WTC11 (cell line): ENCODE measurements at regions of chr18 and their contacts with region 1.

Region 1: DNA sequence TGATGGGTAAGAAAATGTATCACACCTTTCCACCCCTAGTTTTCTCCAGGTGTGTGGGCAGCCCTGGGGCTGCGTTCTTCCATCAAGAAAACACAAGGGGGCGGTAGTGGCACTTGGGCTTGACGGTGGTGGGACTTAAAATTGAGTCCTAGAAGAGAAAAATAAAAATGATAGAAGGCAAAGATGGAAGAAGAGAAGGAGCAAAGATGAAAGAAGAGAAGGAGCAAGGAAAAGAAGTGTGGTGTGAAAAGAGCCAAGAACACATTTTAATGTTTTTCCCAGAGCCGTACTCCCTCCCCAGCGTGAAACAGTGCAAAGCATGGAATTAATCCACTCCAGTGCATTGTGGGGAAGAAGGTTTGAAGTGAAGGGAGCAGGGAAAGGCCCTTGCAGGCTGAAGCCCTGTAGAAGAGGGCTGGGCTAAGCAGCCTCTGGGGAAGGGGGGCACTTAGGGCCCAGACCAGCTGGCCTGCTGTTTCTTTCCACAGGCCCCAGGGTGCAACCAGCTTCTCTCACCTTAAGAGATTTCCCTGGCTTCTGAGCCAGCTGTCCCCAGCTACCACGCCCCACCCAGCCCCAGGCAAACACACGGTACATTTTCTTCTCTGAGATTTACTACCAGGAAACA is 256.8 kb downstream of the RNF152 start:
- DNase-seq: peak; percentile 62
- ATAC-seq: peak; percentile 43
- H3K4me3 Mint-ChIP-seq: no peak overlapping the region
- H3K27ac Mint-ChIP-seq: no peak overlapping the region
- H3K4me1 Mint-ChIP-seq: peaks cover 35% of the 10 kb centered on the region
- H3K27me3 Mint-ChIP-seq: peaks cover 83% of the 10 kb centered on the region
- CTCF ChIP-seq: peak; percentile 83

Region 2: DNA sequence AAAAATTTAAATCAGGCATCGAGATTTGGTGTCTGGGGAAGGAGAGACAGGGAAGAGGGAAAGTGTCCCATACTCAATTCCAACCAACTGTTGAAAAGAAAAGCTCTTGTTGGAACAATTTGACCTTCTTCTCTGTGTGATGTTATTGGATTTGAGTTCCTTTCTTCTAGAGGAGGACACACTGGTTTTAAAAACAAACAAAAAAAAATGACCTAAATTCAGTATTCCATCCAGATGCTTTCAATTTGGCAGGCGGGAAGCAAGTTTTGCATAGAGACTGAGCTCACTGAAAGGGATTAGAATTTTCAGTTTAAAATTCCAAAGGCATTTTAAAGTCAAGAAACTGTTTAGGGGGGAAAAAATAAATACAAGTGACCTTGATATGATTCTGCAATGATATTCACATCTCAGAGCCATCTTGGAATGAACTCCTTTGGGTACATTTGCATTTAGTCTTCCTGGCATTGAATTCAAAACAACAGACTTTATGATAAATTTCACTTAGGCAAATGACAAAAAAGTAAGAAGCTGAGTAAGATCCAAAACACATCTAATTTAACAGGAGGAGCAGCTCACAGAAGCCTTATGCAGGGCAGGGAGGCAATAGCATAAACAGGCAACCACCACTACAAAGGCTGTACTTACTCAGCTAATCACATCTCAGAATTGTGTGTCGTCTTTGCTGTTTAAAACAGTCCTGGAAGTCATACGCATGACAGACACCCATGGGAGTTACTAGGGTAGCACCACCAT is 175.9 kb before region 1 on chr18:
- CTCF ChIA-PET with region 1: no interaction called
- POLR2A ChIA-PET with region 1: no interaction called
- DNase-seq: no peak
- ATAC-seq: no peak
- H3K4me3 Mint-ChIP-seq: no peak overlapping the region
- H3K27ac Mint-ChIP-seq: no peak overlapping the region
- H3K4me1 Mint-ChIP-seq: 0 out of 2 replicates have a peak, but pooled peaks cover 3% of the 10 kb centered on the region
- H3K27me3 Mint-ChIP-seq: no peaks in the 10 kb centered on the region
- CTCF ChIP-seq: no peak

Region 3: DNA sequence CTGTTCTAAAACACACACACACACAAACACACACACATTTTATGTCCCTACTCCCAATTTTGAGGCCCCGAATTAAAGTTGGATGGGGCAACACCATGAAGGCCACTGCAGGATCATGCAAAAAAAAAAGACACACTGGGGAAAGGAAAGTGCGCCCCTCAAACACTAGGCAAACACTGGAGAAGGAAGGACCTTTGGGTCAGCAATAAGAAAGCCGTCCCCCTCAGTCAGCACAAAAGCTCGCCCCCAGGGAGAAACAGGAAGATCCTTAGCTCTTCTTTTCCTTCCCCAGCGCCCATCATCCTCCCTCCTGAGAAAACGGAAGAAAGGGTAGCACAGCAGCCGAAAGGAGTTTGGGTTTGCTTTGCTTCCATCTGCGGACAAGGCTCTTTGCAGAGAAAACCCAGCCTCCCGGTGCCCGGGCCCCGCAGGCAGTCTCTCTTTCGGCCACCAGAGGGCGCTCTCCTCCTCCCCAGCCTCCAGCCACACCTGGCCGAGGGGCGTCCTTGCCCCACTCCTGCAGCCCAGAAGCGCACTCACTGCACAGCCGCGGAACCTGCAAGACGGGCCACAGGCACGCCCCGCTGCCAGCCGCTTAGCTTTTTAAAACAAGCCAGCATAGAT is 54.3 kb before region 1 on chr18:
- CTCF ChIA-PET with region 1: interaction called, 14 read pairs
- POLR2A ChIA-PET with region 1: no interaction called
- DNase-seq: peak; percentile 93
- ATAC-seq: peak; percentile 98
- H3K4me3 Mint-ChIP-seq: peak overlapping the region; percentile 80
- H3K27ac Mint-ChIP-seq: peak overlapping the region; percentile 11; the same call in 1 of the 2 replicates
- H3K4me1 Mint-ChIP-seq: peaks cover 12% of the 10 kb centered on the region
- H3K27me3 Mint-ChIP-seq: peaks cover 16% of the 10 kb centered on the region
- CTCF ChIP-seq: peak; percentile 99

Region 4: GRCh38 chr18:61606759-61607158 is 29.3 kb before region 1 on chr18:
- CTCF ChIA-PET with region 1: interaction called, 12 read pairs
- POLR2A ChIA-PET with region 1: no interaction called
- DNase-seq: peak; percentile 43
- ATAC-seq: peak; percentile 92
- H3K4me3 Mint-ChIP-seq: peak overlapping the region; percentile 58
- H3K27ac Mint-ChIP-seq: peak overlapping the region; percentile 94
- H3K4me1 Mint-ChIP-seq: peaks cover 47% of the 10 kb centered on the region
- H3K27me3 Mint-ChIP-seq: no peaks in the 10 kb centered on the region; the same call in 1 of the 2 replicates
- CTCF ChIP-seq: no peak

Region 5: GRCh38 chr18:61616111-61616610 is 19.9 kb before region 1 on chr18:
- CTCF ChIA-PET with region 1: interaction called, 11 read pairs
- POLR2A ChIA-PET with region 1: no interaction called
- DNase-seq: no peak
- ATAC-seq: peak; percentile 82
- H3K4me3 Mint-ChIP-seq: no peak overlapping the region
- H3K27ac Mint-ChIP-seq: peak overlapping the region; percentile 84
- H3K4me1 Mint-ChIP-seq: peaks cover 39% of the 10 kb centered on the region
- H3K27me3 Mint-ChIP-seq: peaks cover 12% of the 10 kb centered on the region; the same call in 1 of the 2 replicates
- CTCF ChIP-seq: no peak

Region 6: GRCh38 chr18:61893971-61894750 is 258.1 kb after region 1 on chr18:
- CTCF ChIA-PET with region 1: interaction called, 12 read pairs
- POLR2A ChIA-PET with region 1: no interaction called
- DNase-seq: peak; percentile 82
- ATAC-seq: peak; percentile 70
- H3K4me3 Mint-ChIP-seq: peak overlapping the region; percentile 68
- H3K27ac Mint-ChIP-seq: no peak overlapping the region
- H3K4me1 Mint-ChIP-seq: peaks cover 23% of the 10 kb centered on the region
- H3K27me3 Mint-ChIP-seq: peaks cover 58% of the 10 kb centered on the region
- CTCF ChIP-seq: no peak

Region 7: DNA sequence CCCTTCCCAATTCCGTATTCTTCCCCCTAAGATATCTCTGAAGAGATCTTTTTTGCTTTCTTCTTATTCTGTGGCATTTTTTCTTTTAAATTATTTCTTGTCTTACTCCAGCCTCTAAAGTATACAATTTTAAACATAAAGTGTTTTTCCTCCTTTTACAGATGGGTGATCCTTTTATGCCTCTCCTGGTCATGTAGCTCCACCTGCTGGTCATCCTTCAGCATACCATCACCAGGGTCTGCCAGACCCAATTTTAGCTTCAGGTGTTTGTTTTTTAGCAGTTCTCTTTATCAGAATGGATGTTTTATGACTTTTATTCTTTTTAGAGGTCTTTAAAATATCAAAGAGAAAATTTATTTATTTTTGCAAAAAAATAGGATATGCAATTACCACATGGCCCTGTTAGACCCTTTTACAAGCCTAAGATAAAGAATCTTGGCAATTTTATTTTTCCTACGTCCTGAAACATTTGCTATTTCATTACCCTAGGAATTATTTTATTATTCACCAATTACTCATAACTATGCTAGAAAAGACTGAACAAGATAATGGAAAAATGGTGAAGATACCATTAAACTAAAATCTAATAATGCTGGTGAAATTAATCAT is 495.4 kb after region 1 on chr18:
- CTCF ChIA-PET with region 1: interaction called, 29 read pairs
- POLR2A ChIA-PET with region 1: no interaction called
- DNase-seq: peak; percentile 62
- ATAC-seq: peak; percentile 66; the same call in 1 of the 2 replicates
- H3K4me3 Mint-ChIP-seq: no peak overlapping the region
- H3K27ac Mint-ChIP-seq: no peak overlapping the region
- H3K4me1 Mint-ChIP-seq: peaks cover 4% of the 10 kb centered on the region; the same call in 1 of the 2 replicates
- H3K27me3 Mint-ChIP-seq: no peaks in the 10 kb centered on the region
- CTCF ChIP-seq: peak; percentile 70